H1 (cell line): ENCODE measurements at regions of chrX and their contacts with region 1.

Region 1: DNA sequence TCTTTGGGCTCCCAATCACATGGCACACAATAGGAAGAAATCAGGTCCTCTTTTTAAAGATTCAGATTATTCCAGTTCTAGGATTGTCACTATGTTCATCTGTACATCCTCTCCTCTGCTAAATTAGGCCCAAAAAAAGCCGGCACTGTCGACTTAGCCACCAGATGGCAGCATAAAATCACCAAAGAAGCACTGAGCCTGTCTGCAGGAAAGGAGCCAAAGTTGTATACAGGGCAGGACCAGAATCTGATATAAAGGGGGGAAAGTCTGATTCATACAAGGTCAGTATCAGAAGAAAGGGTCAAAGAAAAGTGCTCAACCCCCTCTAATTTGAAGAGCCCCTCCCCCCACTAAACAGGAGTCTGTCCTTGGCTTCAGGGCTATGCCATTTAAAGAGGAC is 292.5 kb downstream of the CHIC1 start:
- DNase-seq: peak in 1 of 2 experiments; percentile 68
- H3K4me3 ChIP-seq: no peak overlapping the region
- H3K27ac ChIP-seq: no peak overlapping the region
- H3K4me1 ChIP-seq: no peaks in the 10 kb centered on the region
- H3K27me3 ChIP-seq: no peaks in the 10 kb centered on the region
- CTCF ChIP-seq: peak; percentile 15 to 69 (median 57)
- EP300 ChIP-seq: no peak
- POLR2A ChIP-seq: no peak
- RAD21 ChIP-seq: peak; percentile 88 to 91

Region 2: DNA sequence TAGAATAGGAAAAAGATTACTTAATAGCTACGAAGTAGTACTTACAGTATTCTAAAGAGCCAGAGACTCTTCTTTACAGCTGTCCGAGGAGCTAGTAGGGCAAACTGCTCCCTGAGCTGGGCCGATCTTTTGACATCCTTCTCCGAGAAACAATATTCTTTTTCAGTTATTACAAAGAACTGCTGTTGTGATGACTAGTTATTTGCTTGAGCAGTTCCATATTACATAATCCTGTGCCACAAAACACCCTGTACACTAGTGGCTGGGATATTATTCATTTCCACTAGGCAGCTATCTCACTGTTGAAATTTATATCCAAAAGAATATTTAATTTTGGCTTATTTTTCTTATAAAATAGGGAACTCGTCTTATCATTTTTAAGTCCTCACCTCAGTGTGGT is 14.2 kb before region 1 on chrX:
- CTCF ChIA-PET with region 1: no interaction called
- POLR2A ChIA-PET with region 1: no interaction called
- DNase-seq: no peak
- H3K4me3 ChIP-seq: no peak overlapping the region
- H3K27ac ChIP-seq: no peak overlapping the region
- H3K4me1 ChIP-seq: no peaks in the 10 kb centered on the region
- H3K27me3 ChIP-seq: no peaks in the 10 kb centered on the region
- CTCF ChIP-seq: no peak
- EP300 ChIP-seq: no peak
- POLR2A ChIP-seq: no peak
- RAD21 ChIP-seq: no peak

Region 3: GRCh38 chrX:74013976-74014375 is 158.4 kb after region 1 on chrX:
- CTCF ChIA-PET with region 1: interaction called, 13 read pairs
- POLR2A ChIA-PET with region 1: no interaction called
- DNase-seq: no peak
- H3K4me3 ChIP-seq: no peak overlapping the region
- H3K27ac ChIP-seq: no peak overlapping the region
- H3K4me1 ChIP-seq: no peaks in the 10 kb centered on the region
- H3K27me3 ChIP-seq: no peaks in the 10 kb centered on the region
- CTCF ChIP-seq: no peak
- EP300 ChIP-seq: no peak
- POLR2A ChIP-seq: no peak
- RAD21 ChIP-seq: no peak